ENCODE measurements at regions of chr1 and their contacts with region 1.

Region 1: GRCh38 chr1:145837656-145838055 is 7.8 kb upstream of the NUDT17 start:
- DNase-seq: no peak
- ATAC-seq: no peak
- H3K4me3 ChIP-seq: no peak overlapping the region
- H3K27ac ChIP-seq: no peak overlapping the region
- H3K4me1 ChIP-seq: no peaks in the 10 kb centered on the region
- CTCF ChIP-seq: no peak
- EP300 ChIP-seq: no peak
- POLR2A ChIP-seq: no peak
- RAD21 ChIP-seq: no peak

Region 2: GRCh38 chr1:145823565-145824498 is 13.8 kb before region 1 on chr1 and contains the starts of genes POLR3C and RNF115:
- CTCF ChIA-PET with region 1: interaction called, 14 read pairs
- POLR2A ChIA-PET with region 1: interaction called, 3 read pairs
- DNase-seq: peak; percentile 83 to 93
- ATAC-seq: peak; percentile 96 to 97
- H3K4me3 ChIP-seq: peak within 1 kb of the TSS; percentile 75
- H3K27ac ChIP-seq: peak within 1 kb of the TSS; percentile 94 to 97
- H3K4me1 ChIP-seq: peaks cover 11% of the 10 kb centered on the region
- CTCF ChIP-seq: no peak
- EP300 ChIP-seq: no peak
- POLR2A ChIP-seq: peak; percentile 60
- RAD21 ChIP-seq: peak; percentile 5 to 17; a peak in 2 of 5 replicates
- polyA plus RNA-seq, gene POLR3C: 58.3 and 65.0 TPM in 2 replicates
- polyA plus RNA-seq, gene RNF115: 18.4 and 18.8 TPM in 2 replicates

Region 3: DNA sequence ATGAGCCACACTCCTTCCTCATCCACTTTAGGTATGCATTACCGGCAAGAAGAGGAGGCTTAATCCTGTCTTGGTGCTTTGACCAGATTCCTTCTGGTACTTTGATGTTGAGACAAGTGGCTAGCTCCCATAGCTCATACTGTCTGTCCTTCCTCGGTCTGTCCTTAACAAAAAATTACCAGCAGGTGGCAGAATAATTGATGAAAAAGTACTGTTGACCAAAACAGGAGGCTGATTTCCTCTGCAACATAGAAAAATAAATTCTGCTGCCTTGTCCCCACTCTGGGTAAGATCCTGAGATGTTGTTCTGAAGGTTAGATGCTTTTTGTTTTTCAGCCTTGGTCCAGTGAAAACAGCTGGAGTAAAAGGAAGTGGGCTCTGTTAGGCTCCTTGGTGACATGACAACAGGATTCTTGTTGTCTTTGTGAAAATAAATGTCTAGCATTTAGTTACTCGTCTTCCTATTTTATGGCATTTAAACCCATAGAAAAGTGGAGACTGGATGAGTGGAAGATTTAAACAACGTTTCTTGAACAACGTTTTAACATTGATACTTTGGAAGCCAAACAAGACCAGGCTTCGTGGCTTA is 195.1 kb after region 1 on chr1:
- CTCF ChIA-PET with region 1: no interaction called
- POLR2A ChIA-PET with region 1: no interaction called
- DNase-seq: peak in 1 of 2 experiments; percentile 61
- ATAC-seq: peak; percentile 15 to 20; a peak in 2 of 6 replicates
- H3K4me3 ChIP-seq: no peak overlapping the region
- H3K27ac ChIP-seq: no peak overlapping the region
- H3K4me1 ChIP-seq: peaks cover 6% of the 10 kb centered on the region; the same call in 2 of the 3 replicates
- CTCF ChIP-seq: peak; percentile 63
- EP300 ChIP-seq: no peak
- POLR2A ChIP-seq: no peak
- RAD21 ChIP-seq: peak; percentile 37 to 53; a peak in 4 of 5 replicates

Measured in A549 (cell line).